IMR-90 (cell line): ENCODE measurements at regions of chr4 and their contacts with region 1.

Region 1: GRCh38 chr4:126916626-126917140 is 716.1 kb upstream of the INTU start:
- DNase-seq: peak; percentile 86
- ATAC-seq: peak; percentile 92
- H3K4me3 ChIP-seq: peak overlapping the region; percentile 21
- H3K27ac ChIP-seq: peak overlapping the region; percentile 86
- H3K4me1 ChIP-seq: peaks cover 7% of the 10 kb centered on the region
- H3K27me3 ChIP-seq: no peaks in the 10 kb centered on the region
- CTCF ChIP-seq: 0 out of 2 replicates have a peak, but pooled peaks have one; percentile 10
- POLR2A ChIP-seq: no peak
- RAD21 ChIP-seq: no peak

Region 2: GRCh38 chr4:126697748-126698147 is 218.9 kb before region 1 on chr4:
- CTCF ChIA-PET with region 1: no interaction called
- POLR2A ChIA-PET with region 1: no interaction called
- dilution Hi-C with region 1: no loop called
- in situ Hi-C with region 1: no loop called
- intact Hi-C with region 1: loop called (anchors 5 kb)
- DNase-seq: peak; percentile 84
- ATAC-seq: peak; percentile 71
- H3K4me3 ChIP-seq: no peak overlapping the region
- H3K27ac ChIP-seq: no peak overlapping the region
- H3K4me1 ChIP-seq: peaks cover 2% of the 10 kb centered on the region; the same call in 1 of the 2 replicates
- H3K27me3 ChIP-seq: no peaks in the 10 kb centered on the region
- CTCF ChIP-seq: no peak
- POLR2A ChIP-seq: no peak
- RAD21 ChIP-seq: no peak